Common myeloid progenitor, CD34-positive (primary cell): ENCODE measurements at regions of chr5 and their contacts with region 1.

Region 1: DNA sequence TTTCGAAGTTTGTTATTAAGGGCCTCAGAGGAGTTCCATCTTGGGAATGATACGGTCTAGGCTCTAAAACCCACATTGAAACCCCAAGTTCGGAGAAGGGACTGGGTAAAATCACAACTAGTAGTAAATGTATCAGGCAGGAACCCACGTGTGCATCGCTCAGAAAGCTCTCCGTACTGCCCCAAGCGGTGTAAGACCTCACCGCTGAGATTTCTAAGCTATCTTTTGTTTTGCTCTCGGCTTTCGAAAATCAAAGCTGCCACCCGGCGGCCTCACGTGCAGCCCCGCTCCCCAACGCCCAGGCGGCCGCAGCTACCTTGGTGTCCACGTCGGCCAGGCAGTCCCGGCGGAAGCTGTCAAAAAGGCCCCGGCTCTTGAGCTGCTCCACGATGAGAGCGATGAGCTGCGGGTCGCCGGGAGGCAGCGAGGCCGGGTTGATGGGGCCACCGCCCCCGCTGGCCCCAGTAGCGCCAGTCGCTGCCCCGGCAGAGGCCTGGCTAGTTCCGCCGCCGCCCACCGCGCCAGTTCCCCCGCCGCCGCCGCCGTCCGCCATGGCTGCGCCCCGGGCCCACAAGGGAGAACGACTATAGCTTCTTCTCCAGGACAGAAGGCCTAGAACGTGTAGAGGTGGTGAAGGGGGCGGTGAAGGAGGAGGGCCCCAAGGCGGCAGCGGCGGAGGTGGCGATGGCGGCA is 420 bp downstream of the BOD1 start:
- DNase-seq: peak; percentile 76 to 89 (median 87)
- H3K4me3 ChIP-seq: peak overlapping the region; percentile 78 to 91 (median 85)
- H3K27ac ChIP-seq: peak overlapping the region in 1 of 2 experiments; percentile 83
- H3K4me1 ChIP-seq: peaks cover 10 to 24% (median 17%) of the 10 kb centered on the region in 4 experiments
- H3K27me3 ChIP-seq: no peaks in the 10 kb centered on the region

Region 2: DNA sequence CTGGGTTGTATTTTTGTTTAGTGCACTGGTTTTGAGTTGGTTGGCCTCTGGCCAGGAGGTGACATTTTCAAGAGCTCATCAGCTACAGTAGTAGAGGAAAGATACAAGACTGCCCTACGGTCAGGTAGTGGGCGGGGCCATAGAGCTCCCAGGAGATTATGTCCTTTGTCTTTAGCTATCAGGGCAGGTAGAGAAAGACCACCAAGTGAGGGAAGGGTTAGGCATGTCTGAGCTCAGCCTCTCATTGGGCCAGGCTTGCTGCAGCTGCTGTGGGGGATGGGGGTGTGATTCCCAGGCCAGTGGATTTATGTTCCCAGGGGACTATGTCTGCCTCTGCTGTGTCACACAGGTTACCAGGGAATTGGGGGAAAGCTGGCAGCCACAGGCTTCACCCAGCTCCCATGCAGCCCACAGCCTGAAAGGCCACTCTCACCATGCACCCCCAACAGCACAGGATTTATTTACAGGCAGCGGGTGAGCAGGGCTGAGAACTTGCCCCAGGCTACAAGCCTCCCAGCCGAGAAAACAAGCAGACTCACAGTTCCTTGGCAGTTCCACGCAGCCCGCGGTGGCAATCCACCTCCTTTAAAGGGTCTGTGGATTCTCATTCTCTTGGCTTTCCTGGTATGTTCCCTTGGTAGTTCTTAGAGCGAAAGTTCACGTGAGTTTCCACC is 37.9 kb after region 1 on chr5:
- CTCF ChIA-PET with region 1: no interaction called
- POLR2A ChIA-PET with region 1: no interaction called
- DNase-seq: no peak
- H3K4me3 ChIP-seq: no peak overlapping the region
- H3K27ac ChIP-seq: no peak overlapping the region
- H3K4me1 ChIP-seq: no peaks in the 10 kb centered on the region
- H3K27me3 ChIP-seq: no peaks in the 10 kb centered on the region

Region 3: DNA sequence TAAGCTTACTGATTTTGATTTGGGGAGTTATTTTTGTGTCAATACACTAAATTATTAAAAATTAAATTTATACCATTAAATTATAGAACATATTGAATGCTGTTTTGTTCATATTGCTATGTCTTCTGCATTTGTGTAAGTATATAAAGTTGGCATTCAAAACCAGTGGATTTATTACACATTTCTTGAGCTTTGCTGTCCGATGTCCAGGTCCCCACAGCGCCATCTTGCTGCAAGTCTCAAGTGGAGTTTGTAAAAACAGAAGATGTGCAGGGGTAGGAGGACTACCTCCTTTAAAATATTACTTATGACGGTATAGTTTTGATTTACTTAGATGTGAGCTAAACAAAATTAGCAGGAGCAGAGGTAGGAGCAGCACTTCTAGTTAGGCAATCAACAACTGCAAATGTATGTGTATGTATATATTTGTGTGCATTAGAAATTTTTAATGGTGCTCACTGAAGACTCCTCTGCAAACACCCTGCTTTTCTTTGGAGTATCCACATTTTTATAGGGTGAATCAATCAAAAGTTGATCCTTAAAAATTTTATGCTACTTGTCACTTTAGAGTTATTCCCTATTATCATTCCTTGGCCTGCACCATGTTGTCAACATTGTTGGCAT is 309.5 kb after region 1 on chr5:
- CTCF ChIA-PET with region 1: interaction called, 33 read pairs
- POLR2A ChIA-PET with region 1: interaction called, 3 read pairs
- DNase-seq: peak; percentile 70 to 83 (median 78)
- H3K4me3 ChIP-seq: no peak overlapping the region
- H3K27ac ChIP-seq: no peak overlapping the region
- H3K4me1 ChIP-seq: peaks cover 2 to 28% (median 22%) of the 10 kb centered on the region in 4 experiments
- H3K27me3 ChIP-seq: no peaks in the 10 kb centered on the region

Region 4: GRCh38 chr5:173972925-173973615 is 357.0 kb after region 1 on chr5:
- CTCF ChIA-PET with region 1: interaction called, 112 read pairs
- POLR2A ChIA-PET with region 1: no interaction called
- DNase-seq: peak; percentile 79 to 90 (median 87)
- H3K4me3 ChIP-seq: peak overlapping the region in 6 of 7 experiments; percentile 42 to 77 (median 64)
- H3K27ac ChIP-seq: no peak overlapping the region
- H3K4me1 ChIP-seq: peaks cover 0 to 15% (median 11%) of the 10 kb centered on the region in 4 experiments
- H3K27me3 ChIP-seq: peaks cover 0 to 3% (median 1%) of the 10 kb centered on the region in 5 experiments